PC-3 (cell line): ENCODE measurements at regions of chr16 and their contacts with region 1.

Region 1: DNA sequence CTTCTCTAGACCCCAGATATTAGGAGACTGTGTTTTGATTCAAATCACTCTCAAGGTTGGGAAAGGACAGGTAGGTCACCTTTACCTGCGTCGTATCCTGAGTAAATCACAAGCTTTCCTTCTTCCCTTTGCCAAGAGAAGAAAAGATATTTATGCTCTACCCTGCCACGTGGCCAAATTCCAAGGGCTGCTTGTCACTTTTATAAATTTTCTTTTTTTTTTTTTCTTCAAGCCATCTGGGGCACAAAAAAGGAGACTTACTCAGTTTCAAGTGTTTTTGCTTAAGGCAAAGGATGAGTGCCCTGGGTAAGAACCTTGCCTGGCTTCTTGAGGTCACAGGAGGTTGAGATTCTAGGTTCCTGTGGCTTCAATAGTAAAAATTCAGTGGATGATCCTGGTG is 285.1 kb downstream of the TMEM114 start:
- DNase-seq: no peak
- ATAC-seq: no peak
- H3K4me3 ChIP-seq: no peak overlapping the region
- H3K27ac ChIP-seq: no peak overlapping the region
- H3K4me1 ChIP-seq: no peaks in the 10 kb centered on the region
- H3K27me3 ChIP-seq: no peaks in the 10 kb centered on the region
- CTCF ChIP-seq: no peak

Region 2: DNA sequence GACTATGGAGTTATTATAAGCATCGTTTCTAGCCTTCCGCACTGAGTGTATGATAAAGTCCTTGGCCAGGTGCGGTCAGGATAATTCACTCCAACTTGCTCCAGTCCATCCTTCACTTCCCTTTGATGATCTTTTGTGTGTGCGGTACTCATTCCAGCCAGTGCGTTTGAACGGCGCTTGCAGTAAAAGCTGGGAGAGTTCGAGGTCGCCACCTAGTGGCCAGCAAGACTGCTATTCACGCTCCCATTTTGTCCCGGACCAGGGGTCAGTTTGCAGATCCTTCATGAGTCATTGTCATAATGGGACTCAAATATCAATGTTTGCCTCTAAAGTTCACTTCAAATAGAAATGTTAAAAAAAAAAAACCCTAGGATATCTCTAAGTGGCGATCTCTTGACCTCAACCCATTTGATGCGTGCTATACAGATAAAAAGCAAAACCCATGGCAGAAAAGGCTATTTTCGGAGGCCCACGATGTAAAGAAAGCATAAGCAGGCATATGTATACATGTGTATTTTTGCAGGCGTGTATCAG is 132.0 kb before region 1 on chr16:
- CTCF ChIA-PET with region 1: no interaction called
- POLR2A ChIA-PET with region 1: no interaction called
- intact Hi-C with region 1: no loop called
- DNase-seq: peak; percentile 68
- ATAC-seq: peak; percentile 54; the same call in 1 of the 2 replicates
- H3K4me3 ChIP-seq: no peak overlapping the region
- H3K27ac ChIP-seq: no peak overlapping the region
- H3K4me1 ChIP-seq: no peaks in the 10 kb centered on the region
- H3K27me3 ChIP-seq: no peaks in the 10 kb centered on the region
- CTCF ChIP-seq: peak; percentile 74

Region 3: GRCh38 chr16:9657641-9658040 is 1352.4 kb after region 1 on chr16:
- CTCF ChIA-PET with region 1: no interaction called
- POLR2A ChIA-PET with region 1: interaction called, 13 read pairs
- intact Hi-C with region 1: no loop called
- DNase-seq: no peak
- ATAC-seq: no peak
- H3K4me3 ChIP-seq: no peak overlapping the region
- H3K27ac ChIP-seq: no peak overlapping the region
- H3K4me1 ChIP-seq: no peaks in the 10 kb centered on the region
- H3K27me3 ChIP-seq: no peaks in the 10 kb centered on the region
- CTCF ChIP-seq: no peak